Sciatic nerve (tissue), 2 donors: ENCODE measurements at regions of chr1 and their contacts with region 1.

Region 1: GRCh38 chr1:17502326-17502778 is 37.1 kb upstream of the ARHGEF10L start:
- DNase-seq: peak; percentile 95
- ATAC-seq: peak; percentile 99

Region 2: DNA sequence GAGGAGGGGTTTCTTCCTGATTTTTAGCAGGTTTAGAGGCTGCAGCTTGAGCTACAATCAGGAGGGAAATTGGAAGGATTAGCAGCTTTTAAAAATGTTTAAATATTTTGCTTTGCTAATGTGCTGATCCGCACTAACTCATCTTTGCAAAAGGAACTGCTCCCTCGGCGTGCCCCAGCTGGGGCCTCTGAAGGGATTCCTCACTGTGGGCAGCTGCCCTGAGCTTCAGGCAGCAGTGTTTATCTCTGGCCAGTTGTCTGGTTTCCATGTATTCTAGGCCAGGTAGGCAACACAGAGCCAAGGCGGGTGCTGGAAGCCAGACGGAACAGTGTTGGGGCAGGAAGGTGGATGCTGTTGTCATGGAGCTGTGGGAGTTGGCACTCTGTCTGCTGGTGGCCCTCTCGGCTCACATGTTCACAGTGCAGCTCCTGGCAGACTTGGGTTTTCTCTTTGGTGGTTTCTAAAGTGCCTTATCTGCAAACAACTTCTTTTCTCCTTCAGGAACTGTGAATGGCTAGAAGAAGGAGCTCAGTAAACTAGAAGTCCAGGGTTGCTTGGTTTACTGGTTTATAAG is 1042.9 kb before region 1 on chr1:
- intact Hi-C with region 1: loop called (anchors 5 kb)
- DNase-seq: no peak
- ATAC-seq: no peak

Region 3: DNA sequence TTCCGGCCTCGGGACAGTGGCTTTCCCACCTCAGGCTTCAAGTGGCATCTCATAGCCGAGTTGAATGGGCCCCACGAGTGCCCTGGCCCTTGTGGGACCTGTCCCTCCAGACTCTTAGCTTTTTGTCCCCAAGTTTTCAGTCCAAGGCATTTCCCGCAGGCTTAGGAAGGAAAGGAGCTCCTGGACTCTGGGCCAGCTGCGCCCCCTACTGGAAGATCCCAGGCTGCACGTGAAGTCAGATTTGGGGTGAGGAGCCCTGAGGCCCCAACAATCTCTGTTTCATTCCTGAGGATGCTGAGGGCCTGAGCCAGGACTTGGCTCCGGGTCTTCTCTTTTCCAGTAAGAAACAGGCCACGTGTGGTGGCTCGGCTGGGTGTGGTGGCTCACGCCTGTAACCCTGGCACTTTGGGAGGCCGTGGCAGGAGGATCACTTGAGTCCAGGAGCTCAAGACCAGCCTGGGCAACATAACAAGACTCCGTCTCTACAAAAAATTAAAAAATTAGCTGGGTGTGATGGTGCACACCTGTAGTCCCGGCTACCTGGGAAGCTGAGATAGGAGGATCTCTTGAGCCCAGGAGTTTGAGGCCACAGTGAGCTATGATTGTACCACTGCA is 104.6 kb after region 1 on chr1:
- intact Hi-C with region 1: loop called (anchors 5 kb)
- DNase-seq: peak; percentile 88
- ATAC-seq: peak; percentile 75